WTC11 (cell line): ENCODE measurements at regions of chr17 and their contacts with region 1.

Region 1: GRCh38 chr17:38674749-38675615 is at the start of gene EPOP:
- DNase-seq: peak; percentile 89
- ATAC-seq: peak; percentile 62
- H3K4me3 Mint-ChIP-seq: peak within 1 kb of the TSS; percentile 54
- H3K27ac Mint-ChIP-seq: no peak within 1 kb of the TSS
- H3K4me1 Mint-ChIP-seq: peaks cover 35% of the 10 kb centered on the region
- H3K27me3 Mint-ChIP-seq: peaks cover 77% of the 10 kb centered on the region
- CTCF ChIP-seq: no peak
- total RNA-seq, gene EPOP: 8.7 to 12.3 TPM (median 9.0 TPM) in 3 replicates

Region 2: GRCh38 chr17:38584350-38584925 is 90.5 kb before region 1 on chr17:
- CTCF ChIA-PET with region 1: interaction called, 727 read pairs
- POLR2A ChIA-PET with region 1: no interaction called
- DNase-seq: peak; percentile 78
- ATAC-seq: peak; percentile 60
- H3K4me3 Mint-ChIP-seq: 0 out of 2 replicates have a peak overlapping the region, but pooled peaks have one; percentile 14
- H3K27ac Mint-ChIP-seq: peak overlapping the region; percentile 36; the same call in 1 of the 2 replicates
- H3K4me1 Mint-ChIP-seq: peaks cover 59% of the 10 kb centered on the region
- H3K27me3 Mint-ChIP-seq: peaks cover 38% of the 10 kb centered on the region
- CTCF ChIP-seq: peak; percentile 97

Region 3: DNA sequence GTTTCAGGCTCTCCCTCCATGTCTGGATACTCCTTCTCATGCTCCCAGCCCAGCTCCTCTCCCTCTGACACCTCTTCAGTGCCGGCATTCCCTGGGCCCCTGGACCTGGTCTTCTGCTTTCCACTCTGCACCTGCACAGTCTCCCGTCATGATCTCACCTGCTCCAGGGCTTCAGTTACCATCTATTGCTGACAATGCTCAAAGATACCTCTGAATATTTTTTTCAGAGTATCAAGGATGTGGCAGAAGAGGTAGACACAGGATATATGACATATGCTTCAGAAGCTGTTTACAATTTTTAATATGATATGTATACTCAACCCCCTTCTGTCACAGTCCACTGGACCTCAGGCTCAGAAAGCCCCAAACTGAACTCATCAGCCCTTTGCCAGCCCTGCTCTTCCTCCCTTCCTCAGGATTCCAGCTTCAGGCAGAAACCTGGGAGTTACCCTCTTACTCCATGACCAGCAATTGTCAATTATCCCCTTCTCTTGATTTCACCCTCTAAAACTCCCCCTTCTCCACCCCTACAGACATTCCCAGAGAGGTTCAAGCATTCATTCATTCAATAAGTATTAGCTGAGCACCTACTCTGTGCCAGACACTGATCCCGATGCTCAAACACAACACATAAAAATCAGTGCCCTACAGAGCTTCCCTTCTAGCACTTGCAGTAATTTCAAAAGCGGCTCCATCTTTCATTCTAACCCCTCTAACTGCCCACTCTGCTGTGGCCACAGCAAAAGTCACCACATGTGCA is 22.3 kb after region 1 on chr17:
- CTCF ChIA-PET with region 1: interaction called, 10 read pairs
- POLR2A ChIA-PET with region 1: no interaction called
- DNase-seq: no peak
- ATAC-seq: no peak
- H3K4me3 Mint-ChIP-seq: no peak overlapping the region
- H3K27ac Mint-ChIP-seq: no peak overlapping the region
- H3K4me1 Mint-ChIP-seq: peaks cover 18% of the 10 kb centered on the region
- H3K27me3 Mint-ChIP-seq: peaks cover 63% of the 10 kb centered on the region
- CTCF ChIP-seq: no peak

Region 4: GRCh38 chr17:38711792-38712571 is 37.0 kb after region 1 on chr17:
- CTCF ChIA-PET with region 1: interaction called, 11 read pairs
- POLR2A ChIA-PET with region 1: no interaction called
- DNase-seq: no peak
- ATAC-seq: no peak
- H3K4me3 Mint-ChIP-seq: no peak overlapping the region
- H3K27ac Mint-ChIP-seq: no peak overlapping the region
- H3K4me1 Mint-ChIP-seq: peaks cover 58% of the 10 kb centered on the region
- H3K27me3 Mint-ChIP-seq: peaks cover 30% of the 10 kb centered on the region
- CTCF ChIP-seq: no peak

Region 5: DNA sequence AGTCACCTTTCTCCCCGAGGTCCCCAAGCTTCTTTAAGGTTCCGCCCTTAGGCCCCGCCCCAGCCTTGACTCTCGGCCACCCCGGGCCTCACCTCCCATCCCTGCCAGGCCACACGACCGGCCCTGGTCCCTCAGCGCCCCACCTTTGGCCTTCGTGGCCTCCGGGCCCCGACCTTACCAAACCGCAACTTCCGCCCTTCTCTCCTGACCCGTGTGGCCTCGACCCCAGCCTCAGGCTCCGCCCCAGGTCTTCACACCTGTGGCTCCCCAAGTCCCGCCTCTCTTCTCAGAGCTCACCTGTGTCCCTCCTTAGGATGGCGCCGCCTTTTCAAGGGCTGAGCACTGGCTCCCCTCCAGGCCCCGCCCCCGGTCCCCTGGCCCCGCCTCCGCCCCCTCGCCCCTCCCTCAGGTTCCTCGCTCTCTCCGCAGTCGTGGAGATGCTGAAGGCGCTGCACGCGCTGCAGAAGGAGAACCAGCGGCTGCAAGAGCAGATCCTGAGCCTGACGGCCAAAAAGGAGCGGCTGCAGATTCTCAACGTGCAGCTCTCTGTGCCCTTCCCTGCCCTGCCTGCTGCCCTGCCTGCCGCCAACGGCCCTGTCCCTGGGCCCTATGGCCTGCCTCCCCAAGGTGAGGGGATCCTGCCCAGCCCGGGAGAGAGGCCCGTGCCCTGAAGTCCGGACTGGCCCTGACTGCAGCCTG is 45.1 kb after region 1 on chr17:
- CTCF ChIA-PET with region 1: interaction called, 13 read pairs
- POLR2A ChIA-PET with region 1: interaction called, 3 read pairs
- DNase-seq: peak; percentile 85
- ATAC-seq: peak; percentile 69
- H3K4me3 Mint-ChIP-seq: peak overlapping the region; percentile 54
- H3K27ac Mint-ChIP-seq: no peak overlapping the region
- H3K4me1 Mint-ChIP-seq: peaks cover 39% of the 10 kb centered on the region
- H3K27me3 Mint-ChIP-seq: peaks cover 12% of the 10 kb centered on the region
- CTCF ChIP-seq: no peak

Region 6: GRCh38 chr17:38729886-38730525 is 55.0 kb after region 1 on chr17 and contains the start of gene CISD3:
- CTCF ChIA-PET with region 1: interaction called, 60 read pairs
- POLR2A ChIA-PET with region 1: no interaction called
- DNase-seq: peak; percentile 74
- ATAC-seq: peak; percentile 75
- H3K4me3 Mint-ChIP-seq: peak within 1 kb of the TSS; percentile 94
- H3K27ac Mint-ChIP-seq: peak within 1 kb of the TSS; percentile 88
- H3K4me1 Mint-ChIP-seq: peaks cover 37% of the 10 kb centered on the region
- H3K27me3 Mint-ChIP-seq: peaks cover 23% of the 10 kb centered on the region
- CTCF ChIP-seq: peak; percentile 55; the same call in 1 of the 2 replicates
- total RNA-seq, gene CISD3: 12.1 to 15.7 TPM (median 15.6 TPM) in 3 replicates

Region 7: DNA sequence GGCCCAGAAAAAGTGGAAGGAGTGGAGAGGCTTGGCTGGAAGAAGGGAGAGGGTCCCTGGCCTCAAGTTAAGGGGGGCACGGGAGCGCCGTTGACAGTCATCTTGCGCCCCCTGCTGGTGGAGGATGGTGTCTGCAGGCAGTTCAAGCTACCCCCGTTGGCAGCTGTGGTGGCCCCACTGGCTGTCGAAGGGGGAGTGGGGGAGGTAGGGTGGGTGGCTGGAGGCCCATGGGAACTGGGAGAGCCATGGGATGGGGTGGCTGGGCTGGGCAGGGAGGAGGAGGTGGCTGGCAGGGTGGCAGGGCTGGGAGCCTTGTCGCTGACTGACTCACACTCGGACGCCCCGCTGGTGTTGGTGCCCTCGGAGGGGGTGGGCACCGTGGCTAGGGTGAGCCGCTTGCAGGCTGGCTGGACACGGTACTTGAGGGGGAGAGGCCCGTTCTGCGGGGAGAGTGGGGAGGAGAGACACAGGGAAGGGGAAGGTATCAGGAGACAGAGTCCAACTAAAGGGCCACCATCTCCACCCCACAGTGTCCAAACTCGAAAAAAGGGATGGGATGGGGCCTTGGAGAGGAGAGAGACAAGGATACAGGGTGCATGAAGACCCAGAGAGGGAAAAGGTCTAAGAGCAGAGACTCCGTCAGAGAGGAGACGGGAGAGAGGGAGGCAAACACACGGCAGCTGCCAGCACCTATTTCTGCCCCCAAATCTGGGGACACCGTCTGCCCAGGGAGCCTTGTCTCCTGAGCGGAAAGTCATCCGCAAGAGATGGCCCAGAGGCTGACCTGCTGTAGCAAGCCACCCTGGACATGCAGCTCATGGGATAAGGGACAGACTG is 60.4 kb after region 1 on chr17:
- CTCF ChIA-PET with region 1: interaction called, 60 read pairs
- POLR2A ChIA-PET with region 1: no interaction called
- DNase-seq: peak; percentile 85
- ATAC-seq: peak; percentile 34
- H3K4me3 Mint-ChIP-seq: no peak overlapping the region
- H3K27ac Mint-ChIP-seq: peak overlapping the region; percentile 82; the same call in 1 of the 2 replicates
- H3K4me1 Mint-ChIP-seq: peaks cover 26% of the 10 kb centered on the region
- H3K27me3 Mint-ChIP-seq: no peaks in the 10 kb centered on the region; the same call in 1 of the 2 replicates
- CTCF ChIP-seq: peak; percentile 94

Region 8: GRCh38 chr17:38761612-38762011 is 86.6 kb after region 1 on chr17:
- CTCF ChIA-PET with region 1: no interaction called
- POLR2A ChIA-PET with region 1: no interaction called
- DNase-seq: peak; percentile 73
- ATAC-seq: peak; percentile 93
- H3K4me3 Mint-ChIP-seq: no peak overlapping the region
- H3K27ac Mint-ChIP-seq: no peak overlapping the region
- H3K4me1 Mint-ChIP-seq: no peaks in the 10 kb centered on the region
- H3K27me3 Mint-ChIP-seq: no peaks in the 10 kb centered on the region
- CTCF ChIP-seq: peak; percentile 44